ENCODE measurements at regions of chr9 and their contacts with region 1.

Region 1: DNA sequence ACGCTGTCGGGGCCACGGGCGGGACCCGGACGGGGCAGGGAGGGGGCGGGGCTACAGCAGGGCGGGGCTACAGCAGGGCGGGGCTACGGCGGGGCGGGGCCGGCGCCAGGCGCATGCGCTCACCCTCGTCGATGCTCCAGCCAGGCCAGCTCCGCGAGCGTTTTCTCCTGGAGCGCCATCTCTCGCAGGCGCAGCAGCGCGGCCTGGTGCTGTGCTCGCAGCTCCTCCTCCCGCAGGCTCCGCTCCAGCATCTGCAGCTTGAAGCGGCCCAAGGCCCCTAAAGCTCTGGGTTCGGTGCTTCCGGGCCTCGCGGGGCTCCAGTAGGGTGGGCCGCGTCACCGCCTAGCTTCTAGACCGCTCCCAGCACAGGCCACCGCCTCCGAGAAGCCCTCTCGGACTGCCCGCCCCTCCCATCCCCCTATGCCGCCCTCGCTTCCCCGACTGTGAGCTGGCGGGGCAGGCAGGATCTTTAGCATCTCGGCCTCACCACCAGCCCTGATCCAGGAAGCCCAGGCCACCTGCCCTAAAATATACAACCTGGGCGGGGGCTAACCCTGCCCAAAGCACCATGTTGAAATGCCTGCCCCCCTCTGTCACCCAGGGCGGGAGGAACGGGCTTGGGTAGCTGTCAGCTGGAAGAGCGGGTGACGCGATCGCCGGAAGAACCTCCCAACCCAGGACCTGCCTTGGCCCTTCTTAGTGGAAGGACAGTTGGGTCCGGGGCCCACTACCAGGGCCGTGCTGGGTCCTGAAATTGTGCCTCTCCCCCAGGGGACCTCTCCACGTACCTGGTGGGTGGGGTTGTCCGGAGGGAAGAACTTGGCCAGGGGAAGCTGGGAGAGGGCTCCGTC is 21.9 kb upstream of the QSOX2 start:
- DNase-seq: peak; percentile 57 to 83
- H3K4me3 ChIP-seq: peak overlapping the region; percentile 63
- H3K27ac ChIP-seq: no peak overlapping the region
- H3K4me1 ChIP-seq: no peaks in the 10 kb centered on the region; the same call in 1 of the 2 replicates
- H3K27me3 ChIP-seq: peaks cover 47% of the 10 kb centered on the region
- CTCF ChIP-seq: no peak; the same call in 1 of the 2 replicates

Region 2: GRCh38 chr9:136143216-136144001 is 124.1 kb before region 1 on chr9:
- CTCF ChIA-PET with region 1: no interaction called
- POLR2A ChIA-PET with region 1: no interaction called
- intact Hi-C with region 1: loop called (anchors 5 kb)
- DNase-seq: peak in 1 of 2 experiments; percentile 56
- H3K4me3 ChIP-seq: no peak overlapping the region
- H3K27ac ChIP-seq: no peak overlapping the region
- H3K4me1 ChIP-seq: no peaks in the 10 kb centered on the region
- H3K27me3 ChIP-seq: peaks cover 45% of the 10 kb centered on the region
- CTCF ChIP-seq: peak; percentile 54; the same call in 1 of the 2 replicates

Region 3: GRCh38 chr9:136187683-136188586 is 79.6 kb before region 1 on chr9:
- CTCF ChIA-PET with region 1: no interaction called
- POLR2A ChIA-PET with region 1: interaction called, 17 read pairs
- intact Hi-C with region 1: no loop called
- DNase-seq: no peak
- H3K4me3 ChIP-seq: no peak overlapping the region
- H3K27ac ChIP-seq: no peak overlapping the region
- H3K4me1 ChIP-seq: no peaks in the 10 kb centered on the region
- H3K27me3 ChIP-seq: peaks cover 40% of the 10 kb centered on the region
- CTCF ChIP-seq: no peak